Ascending aorta (tissue), 2 donors: ENCODE measurements at regions of chr4 and their contacts with region 1.

Region 1: GRCh38 chr4:781493-782216 is 44.3 kb downstream of the CPLX1 start:
- DNase-seq: peak; percentile 99
- H3K4me3 ChIP-seq: peak overlapping the region; percentile 87 to 97
- H3K27ac ChIP-seq: peak overlapping the region; percentile 92 to 94
- H3K4me1 ChIP-seq: peaks cover 8 to 31% of the 10 kb centered on the region in 2 donors
- H3K27me3 ChIP-seq: peaks cover 14% of the 10 kb centered on the region
- CTCF ChIP-seq: no peak

Region 2: GRCh38 chr4:337143-337931 is 444.3 kb before region 1 on chr4 and contains the start of gene ZNF141:
- intact Hi-C with region 1: loop called (anchors 2 kb)
- DNase-seq: peak; percentile 92 to 98
- H3K4me3 ChIP-seq: peak within 1 kb of the TSS; percentile 84 to 100
- H3K27ac ChIP-seq: peak within 1 kb of the TSS; percentile 94 to 95
- H3K4me1 ChIP-seq: peaks cover 0 to 14% of the 10 kb centered on the region in 2 donors
- H3K27me3 ChIP-seq: no peaks in the 10 kb centered on the region
- CTCF ChIP-seq: no peak
- total RNA-seq, gene ZNF141: 2.9 TPM

Region 3: DNA sequence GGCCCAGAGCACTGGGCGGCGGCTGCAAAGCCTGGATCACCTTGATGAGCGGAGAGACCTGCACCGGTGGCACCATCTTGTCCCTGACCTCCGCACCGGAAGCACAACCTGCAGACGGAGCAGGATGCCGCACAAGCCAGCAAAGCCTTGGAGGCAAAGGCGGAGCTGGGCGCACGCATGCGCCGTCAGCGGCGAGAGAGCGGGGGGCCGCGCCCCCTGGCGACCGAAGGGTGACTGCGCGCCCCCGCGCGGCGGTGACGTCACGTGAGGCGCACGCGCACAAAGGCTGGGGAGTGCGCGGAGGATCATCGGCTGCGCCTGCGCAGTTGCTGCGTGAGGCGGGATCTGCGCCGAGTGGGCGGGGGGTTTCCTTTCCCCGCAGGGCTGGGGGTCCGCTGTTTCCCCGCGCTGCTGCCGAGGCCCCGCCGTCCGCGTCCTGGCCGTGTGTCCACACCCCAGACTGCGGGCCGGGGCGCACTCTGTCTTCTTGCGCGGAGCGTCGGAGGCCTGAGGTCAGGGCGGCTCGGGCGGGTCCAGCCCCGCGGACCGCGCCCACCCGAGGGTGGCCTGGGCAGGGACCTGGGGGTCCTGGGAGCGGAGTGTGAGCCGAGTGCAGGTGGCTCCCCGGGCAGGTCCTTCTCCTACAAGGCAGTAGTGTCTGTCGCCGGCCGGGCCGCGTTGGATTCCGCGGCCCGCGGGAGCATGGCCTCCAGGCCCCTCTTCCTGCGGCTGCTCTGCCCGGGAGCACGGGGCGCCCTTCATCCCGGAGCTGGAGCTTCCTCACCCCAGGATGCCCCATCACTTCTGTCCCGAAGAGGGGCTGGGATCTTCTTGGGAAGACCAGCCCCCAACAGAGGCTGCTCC is 107.3 kb before region 1 on chr4 and contains the starts of genes ATP5ME and MYL5:
- intact Hi-C with region 1: loop called (anchors 1 kb)
- DNase-seq: peak; percentile 92 to 98
- H3K4me3 ChIP-seq: peak within 1 kb of the TSS; percentile 68 to 92
- H3K27ac ChIP-seq: peak within 1 kb of the TSS; percentile 92
- H3K4me1 ChIP-seq: peaks cover 9 to 15% of the 10 kb centered on the region in 2 donors
- H3K27me3 ChIP-seq: no peaks in the 10 kb centered on the region
- CTCF ChIP-seq: peak; percentile 76 to 85 (median 85)
- total RNA-seq, gene ATP5ME: not detected
- total RNA-seq, gene MYL5: 1.1 TPM

Region 4: GRCh38 chr4:931960-932712 is 150.5 kb after region 1 on chr4 and contains the starts of genes GAK and TMEM175:
- intact Hi-C with region 1: loop called (anchors 2 kb)
- DNase-seq: peak; percentile 80 to 98
- H3K4me3 ChIP-seq: peak within 1 kb of the TSS; percentile 76 to 82
- H3K27ac ChIP-seq: peak within 1 kb of the TSS; percentile 88
- H3K4me1 ChIP-seq: peaks cover 11 to 26% of the 10 kb centered on the region in 2 donors
- H3K27me3 ChIP-seq: no peaks in the 10 kb centered on the region
- CTCF ChIP-seq: peak in 1 of 3 experiments; percentile 2
- total RNA-seq, gene GAK: 87.3 TPM
- total RNA-seq, gene TMEM175: 41.2 TPM

Region 5: GRCh38 chr4:1011022-1011694 is 229.5 kb after region 1 on chr4 and contains the start of gene FGFRL1:
- intact Hi-C with region 1: loop called (anchors 2 kb)
- DNase-seq: peak; percentile 60 to 95
- H3K4me3 ChIP-seq: peak within 1 kb of the TSS; percentile 72 to 89
- H3K27ac ChIP-seq: peak within 1 kb of the TSS; percentile 88 to 89
- H3K4me1 ChIP-seq: peaks cover 21 to 23% of the 10 kb centered on the region in 2 donors
- H3K27me3 ChIP-seq: no peaks in the 10 kb centered on the region
- CTCF ChIP-seq: no peak
- total RNA-seq, gene FGFRL1: 79.1 TPM